CD8-positive, alpha-beta T cell (primary cell): ENCODE measurements at regions of chr1 and their contacts with region 1.

Region 1: GRCh38 chr1:156813750-156814570 is 2.7 kb downstream of the SH2D2A start:
- DNase-seq: peak; percentile 47 to 90 (median 78)
- ATAC-seq: peak; percentile 56
- H3K4me3 ChIP-seq: peak overlapping the region; percentile 75
- H3K4me3 Mint-ChIP-seq: peak overlapping the region; percentile 84
- H3K27ac ChIP-seq: peak overlapping the region; percentile 91 to 99
- H3K27ac Mint-ChIP-seq: peak overlapping the region; percentile 99
- H3K4me1 ChIP-seq: peaks cover 53% of the 10 kb centered on the region
- H3K4me1 Mint-ChIP-seq: peaks cover 69% of the 10 kb centered on the region
- H3K27me3 ChIP-seq: no peaks in the 10 kb centered on the region
- H3K27me3 Mint-ChIP-seq: no peaks in the 10 kb centered on the region
- CTCF ChIP-seq: peak; percentile 68

Region 2: GRCh38 chr1:156740679-156741612 is 73.0 kb before region 1 on chr1 and contains the start of gene MRPL24:
- CTCF ChIA-PET with region 1: no interaction called
- POLR2A ChIA-PET with region 1: interaction called, 4 read pairs
- intact Hi-C with region 1: loop called in 1 of 2 experiments (anchors 1 kb)
- DNase-seq: peak; percentile 88 to 100 (median 96)
- ATAC-seq: peak; percentile 88
- H3K4me3 ChIP-seq: peak within 1 kb of the TSS; percentile 60 to 68
- H3K4me3 Mint-ChIP-seq: peak within 1 kb of the TSS; percentile 97
- H3K27ac ChIP-seq: peak within 1 kb of the TSS; percentile 55 to 81
- H3K27ac Mint-ChIP-seq: peak within 1 kb of the TSS; percentile 98
- H3K4me1 ChIP-seq: peaks cover 13% of the 10 kb centered on the region
- H3K4me1 Mint-ChIP-seq: peaks cover 38% of the 10 kb centered on the region
- H3K27me3 ChIP-seq: no peaks in the 10 kb centered on the region
- H3K27me3 Mint-ChIP-seq: no peaks in the 10 kb centered on the region
- CTCF ChIP-seq: no peak
- total RNA-seq, gene MRPL24: 9.1 to 12.5 TPM

Region 3: GRCh38 chr1:156751758-156752757 is 61.9 kb before region 1 on chr1:
- CTCF ChIA-PET with region 1: interaction called, 3 read pairs
- POLR2A ChIA-PET with region 1: no interaction called
- intact Hi-C with region 1: loop called in 1 of 2 experiments (anchors 1 kb)
- DNase-seq: peak; percentile 94 to 98 (median 97)
- ATAC-seq: peak; percentile 85
- H3K4me3 ChIP-seq: peak overlapping the region; percentile 89 to 92
- H3K4me3 Mint-ChIP-seq: peak overlapping the region; percentile 89
- H3K27ac ChIP-seq: peak overlapping the region; percentile 65 to 89
- H3K27ac Mint-ChIP-seq: peak overlapping the region; percentile 90
- H3K4me1 ChIP-seq: peaks cover 48% of the 10 kb centered on the region
- H3K4me1 Mint-ChIP-seq: peaks cover 57% of the 10 kb centered on the region
- H3K27me3 ChIP-seq: no peaks in the 10 kb centered on the region
- H3K27me3 Mint-ChIP-seq: no peaks in the 10 kb centered on the region
- CTCF ChIP-seq: no peak

Region 4: DNA sequence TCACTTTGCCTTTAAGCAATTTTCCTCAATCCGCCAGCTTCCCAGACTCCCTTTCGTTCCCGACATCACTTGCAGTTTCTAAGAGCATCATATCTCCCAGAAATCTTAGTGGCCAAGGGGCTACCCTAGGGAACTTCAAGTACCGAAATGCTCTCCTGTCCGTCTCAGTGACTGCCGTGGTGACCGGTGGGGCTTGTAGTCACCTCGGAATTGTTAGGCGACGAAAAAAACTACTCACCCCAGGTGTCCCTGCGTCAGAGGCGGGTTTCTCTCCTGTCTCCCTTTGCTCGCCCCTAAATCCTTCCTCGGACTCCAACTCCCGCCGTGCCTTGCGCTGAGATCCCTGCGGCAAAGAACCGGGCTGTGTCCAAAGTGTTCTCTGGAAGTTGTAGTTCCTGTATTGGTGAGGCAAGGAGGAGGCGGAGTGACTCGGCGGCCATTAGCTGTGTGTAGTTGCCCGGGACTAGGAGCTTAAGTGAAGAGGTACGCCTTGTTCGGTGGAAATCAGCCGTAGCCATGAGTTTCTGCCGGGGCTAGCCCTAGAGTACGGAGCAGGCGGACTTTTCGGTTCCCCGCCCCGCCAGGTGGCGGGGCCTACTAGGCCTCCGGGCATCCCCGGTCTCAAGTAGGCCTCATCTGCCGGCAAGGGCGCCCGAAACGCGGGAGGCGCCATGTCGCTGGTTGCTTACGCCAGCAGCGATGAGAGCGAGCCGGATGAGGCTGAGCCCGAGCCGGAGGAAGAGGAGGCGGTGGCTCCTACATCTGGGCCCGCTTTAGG is 46.7 kb before region 1 on chr1 and contains the start of gene PRCC:
- CTCF ChIA-PET with region 1: no interaction called
- POLR2A ChIA-PET with region 1: interaction called, 5 read pairs
- intact Hi-C with region 1: loop called in 1 of 2 experiments (anchors 1 kb)
- DNase-seq: peak; percentile 93 to 100 (median 97)
- ATAC-seq: peak; percentile 90
- H3K4me3 ChIP-seq: peak within 1 kb of the TSS; percentile 66 to 69
- H3K4me3 Mint-ChIP-seq: no peak within 1 kb of the TSS
- H3K27ac ChIP-seq: peak within 1 kb of the TSS; percentile 87 to 90
- H3K27ac Mint-ChIP-seq: no peak within 1 kb of the TSS
- H3K4me1 ChIP-seq: peaks cover 29% of the 10 kb centered on the region
- H3K4me1 Mint-ChIP-seq: peaks cover 41% of the 10 kb centered on the region
- H3K27me3 ChIP-seq: no peaks in the 10 kb centered on the region
- H3K27me3 Mint-ChIP-seq: no peaks in the 10 kb centered on the region
- CTCF ChIP-seq: no peak
- total RNA-seq, gene PRCC: 55.6 to 58.4 TPM

Region 5: DNA sequence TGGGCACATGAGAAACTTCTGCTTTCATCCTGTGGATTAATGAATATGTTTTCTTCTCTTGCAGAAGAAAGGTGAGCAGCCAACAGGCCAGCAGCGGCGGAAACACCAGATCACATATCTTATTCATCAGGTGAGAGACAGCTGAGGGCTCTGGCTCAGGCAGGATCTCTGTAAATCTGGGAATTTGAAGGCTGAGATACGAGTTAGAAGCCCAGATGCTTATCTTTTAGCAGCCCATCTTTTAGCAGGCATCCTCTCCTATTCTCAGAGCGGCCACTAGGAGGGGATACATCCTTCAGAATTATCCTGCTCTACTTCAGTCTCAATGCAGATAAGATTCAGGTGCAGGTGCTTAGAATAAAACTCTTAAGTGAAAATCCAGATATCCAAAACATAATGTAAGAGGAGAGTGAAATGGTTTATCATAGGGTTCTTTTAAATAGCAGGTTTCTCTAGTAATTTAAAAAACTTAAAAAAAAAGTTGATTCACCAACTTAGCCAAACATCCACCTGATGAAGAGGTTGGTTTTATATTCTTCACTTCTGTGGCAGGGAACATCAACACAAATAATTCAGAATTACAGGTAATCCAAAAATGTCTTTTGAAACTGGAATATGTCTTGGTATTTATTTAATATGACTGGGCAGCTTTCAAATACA is 16.6 kb before region 1 on chr1:
- CTCF ChIA-PET with region 1: interaction called, 54 read pairs
- POLR2A ChIA-PET with region 1: interaction called, 5 read pairs
- intact Hi-C with region 1: loop called in 1 of 2 experiments (anchors 1 kb)
- DNase-seq: peak in 7 of 9 experiments; percentile 48 to 84 (median 68)
- ATAC-seq: peak; percentile 91
- H3K4me3 ChIP-seq: no peak overlapping the region
- H3K4me3 Mint-ChIP-seq: no peak overlapping the region
- H3K27ac ChIP-seq: no peak overlapping the region
- H3K27ac Mint-ChIP-seq: no peak overlapping the region
- H3K4me1 ChIP-seq: no peaks in the 10 kb centered on the region
- H3K4me1 Mint-ChIP-seq: peaks cover 8% of the 10 kb centered on the region
- H3K27me3 ChIP-seq: no peaks in the 10 kb centered on the region
- H3K27me3 Mint-ChIP-seq: no peaks in the 10 kb centered on the region
- CTCF ChIP-seq: peak; percentile 87

Region 6: GRCh38 chr1:156852418-156852874 is 38.5 kb after region 1 on chr1:
- CTCF ChIA-PET with region 1: interaction called, 10 read pairs
- POLR2A ChIA-PET with region 1: no interaction called
- intact Hi-C with region 1: loop called in 1 of 2 experiments (anchors 1 kb)
- DNase-seq: no peak
- ATAC-seq: no peak
- H3K4me3 ChIP-seq: no peak overlapping the region
- H3K4me3 Mint-ChIP-seq: no peak overlapping the region
- H3K27ac ChIP-seq: no peak overlapping the region
- H3K27ac Mint-ChIP-seq: no peak overlapping the region
- H3K4me1 ChIP-seq: peaks cover 18% of the 10 kb centered on the region
- H3K4me1 Mint-ChIP-seq: peaks cover 13% of the 10 kb centered on the region
- H3K27me3 ChIP-seq: no peaks in the 10 kb centered on the region
- H3K27me3 Mint-ChIP-seq: no peaks in the 10 kb centered on the region
- CTCF ChIP-seq: no peak

Region 7: DNA sequence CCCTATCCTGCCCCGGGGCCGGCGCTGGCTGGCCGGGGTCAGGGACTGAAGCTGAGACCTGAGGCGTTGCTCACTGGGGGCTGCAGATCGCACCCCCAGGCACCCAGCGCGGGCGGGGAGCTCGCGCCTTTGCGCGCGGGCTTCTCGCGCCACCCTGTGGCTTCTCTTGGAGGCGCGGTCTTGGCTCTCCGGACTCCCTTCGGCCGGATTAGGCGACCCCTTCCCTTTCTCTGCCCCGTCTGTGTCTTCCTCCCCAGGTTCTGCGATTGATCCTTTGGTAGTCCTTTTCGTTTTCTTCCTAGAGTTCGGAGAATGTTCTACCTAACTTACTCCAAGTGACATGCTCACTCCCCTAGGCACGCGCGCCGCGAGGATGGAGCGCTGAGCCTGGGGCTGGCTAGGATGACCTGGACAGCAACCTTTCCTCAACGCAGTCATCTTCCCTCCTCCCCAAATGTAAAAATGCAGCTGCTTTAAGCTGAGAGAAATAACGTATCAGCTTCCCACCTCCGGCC is 46.2 kb after region 1 on chr1:
- CTCF ChIA-PET with region 1: interaction called, 29 read pairs
- POLR2A ChIA-PET with region 1: interaction called, 22 read pairs
- intact Hi-C with region 1: loop called (anchors 1 kb)
- DNase-seq: peak in 8 of 9 experiments; percentile 47 to 78 (median 63)
- ATAC-seq: peak; percentile 70
- H3K4me3 ChIP-seq: peak overlapping the region; percentile 54 to 73
- H3K4me3 Mint-ChIP-seq: peak overlapping the region; percentile 77
- H3K27ac ChIP-seq: no peak overlapping the region
- H3K27ac Mint-ChIP-seq: peak overlapping the region; percentile 14
- H3K4me1 ChIP-seq: peaks cover 27% of the 10 kb centered on the region
- H3K4me1 Mint-ChIP-seq: peaks cover 25% of the 10 kb centered on the region
- H3K27me3 ChIP-seq: peaks cover 42 to 44% of the 10 kb centered on the region in 2 experiments
- H3K27me3 Mint-ChIP-seq: peaks cover 51% of the 10 kb centered on the region
- CTCF ChIP-seq: peak; percentile 79